ENCODE measurements at regions of chr11 and their contacts with region 1.

Region 1: GRCh38 chr11:72141066-72141465 is 5.5 kb downstream of the FOLR3 start:
- DNase-seq: peak; percentile 78
- ATAC-seq: peak; percentile 78
- H3K4me3 Mint-ChIP-seq: peak overlapping the region; percentile 0
- H3K27ac Mint-ChIP-seq: peak overlapping the region; percentile 67
- H3K4me1 Mint-ChIP-seq: peaks cover 45% of the 10 kb centered on the region
- H3K27me3 Mint-ChIP-seq: no peaks in the 10 kb centered on the region

Region 2: DNA sequence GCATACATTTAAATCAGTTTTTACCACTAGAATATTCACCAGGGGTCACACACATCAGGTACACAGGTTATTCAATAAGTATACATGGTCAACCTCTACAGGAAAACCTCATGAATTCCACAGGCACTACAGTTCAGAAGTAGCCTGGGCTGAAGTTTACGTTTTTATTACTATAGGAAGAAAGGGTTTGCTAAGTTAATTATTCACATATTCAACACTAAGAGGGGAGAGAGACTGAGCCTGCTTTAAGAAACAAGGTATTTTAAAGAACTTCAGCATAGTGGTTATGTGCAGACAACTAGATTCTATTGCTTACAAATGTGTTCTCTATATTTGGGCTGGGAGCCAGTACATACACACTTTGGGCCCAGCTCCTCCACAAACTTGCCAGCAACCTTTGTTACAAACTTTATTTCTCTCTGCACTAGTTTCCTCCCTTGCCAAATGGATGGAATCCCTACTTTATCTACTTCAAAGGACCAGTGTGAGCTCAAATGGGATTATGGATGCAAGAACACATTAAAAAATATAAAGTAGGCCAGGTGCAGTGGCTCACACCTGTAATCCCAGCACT is 110.5 kb before region 1 on chr11:
- CTCF ChIA-PET with region 1: interaction called, 54 read pairs
- DNase-seq: no peak
- ATAC-seq: no peak
- H3K4me3 Mint-ChIP-seq: no peak overlapping the region
- H3K27ac Mint-ChIP-seq: no peak overlapping the region
- H3K4me1 Mint-ChIP-seq: peaks cover 11% of the 10 kb centered on the region
- H3K27me3 Mint-ChIP-seq: no peaks in the 10 kb centered on the region

Region 3: GRCh38 chr11:72100462-72100861 is 40.6 kb before region 1 on chr11:
- CTCF ChIA-PET with region 1: interaction called, 18 read pairs
- DNase-seq: no peak
- ATAC-seq: no peak
- H3K4me3 Mint-ChIP-seq: no peak overlapping the region
- H3K27ac Mint-ChIP-seq: peak overlapping the region; percentile 60
- H3K4me1 Mint-ChIP-seq: peaks cover 39% of the 10 kb centered on the region
- H3K27me3 Mint-ChIP-seq: no peaks in the 10 kb centered on the region

Region 4: GRCh38 chr11:72123117-72123653 is 17.9 kb before region 1 on chr11:
- CTCF ChIA-PET with region 1: interaction called, 11 read pairs
- DNase-seq: no peak
- ATAC-seq: no peak
- H3K4me3 Mint-ChIP-seq: no peak overlapping the region
- H3K27ac Mint-ChIP-seq: no peak overlapping the region
- H3K4me1 Mint-ChIP-seq: peaks cover 11% of the 10 kb centered on the region
- H3K27me3 Mint-ChIP-seq: peaks cover 19% of the 10 kb centered on the region

Region 5: GRCh38 chr11:72189461-72190275 is 48.6 kb after region 1 on chr11:
- CTCF ChIA-PET with region 1: interaction called, 31 read pairs
- DNase-seq: no peak
- ATAC-seq: no peak
- H3K4me3 Mint-ChIP-seq: no peak overlapping the region
- H3K27ac Mint-ChIP-seq: no peak overlapping the region
- H3K4me1 Mint-ChIP-seq: no peaks in the 10 kb centered on the region
- H3K27me3 Mint-ChIP-seq: no peaks in the 10 kb centered on the region

Region 6: DNA sequence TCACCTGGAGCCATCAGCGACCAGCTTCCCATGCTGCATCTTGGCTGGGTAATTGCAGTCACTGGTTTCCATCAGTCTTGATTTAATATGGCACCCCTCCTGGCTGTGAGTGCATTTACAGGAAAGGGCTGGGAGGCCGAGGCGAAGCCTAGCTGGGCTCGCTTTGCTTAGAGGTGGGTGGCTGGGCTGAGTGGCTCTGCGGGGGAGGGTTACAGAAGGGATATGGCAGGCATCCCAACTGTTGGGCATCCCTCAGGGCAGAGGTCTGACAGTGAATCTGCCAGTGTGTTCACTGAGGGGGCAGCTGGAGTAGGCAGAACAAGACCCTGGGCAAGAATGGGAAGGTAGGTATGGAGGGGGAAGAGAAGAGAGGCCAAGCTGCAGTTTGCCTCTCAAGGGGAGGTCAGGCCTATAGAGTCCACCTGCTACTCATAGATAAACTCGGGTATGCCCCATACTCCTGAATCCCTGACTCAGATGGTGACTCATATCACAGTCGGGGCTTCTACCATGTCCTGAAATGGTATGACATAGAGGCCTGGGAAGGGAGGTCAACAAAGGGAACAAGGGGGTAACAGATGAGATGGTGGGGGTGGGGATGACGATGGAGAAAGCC is 180.4 kb after region 1 on chr11:
- CTCF ChIA-PET with region 1: no interaction called
- DNase-seq: no peak
- ATAC-seq: no peak
- H3K4me3 Mint-ChIP-seq: no peak overlapping the region
- H3K27ac Mint-ChIP-seq: no peak overlapping the region
- H3K4me1 Mint-ChIP-seq: peaks cover 8% of the 10 kb centered on the region
- H3K27me3 Mint-ChIP-seq: no peaks in the 10 kb centered on the region

Region 7: GRCh38 chr11:72373163-72373562 is 232.1 kb after region 1 on chr11:
- CTCF ChIA-PET with region 1: no interaction called
- DNase-seq: no peak
- ATAC-seq: no peak
- H3K4me3 Mint-ChIP-seq: no peak overlapping the region
- H3K27ac Mint-ChIP-seq: no peak overlapping the region
- H3K4me1 Mint-ChIP-seq: no peaks in the 10 kb centered on the region
- H3K27me3 Mint-ChIP-seq: no peaks in the 10 kb centered on the region

Measured in activated CD8-positive, alpha-beta memory T cell treated with anti-CD3 and anti-CD28 coated beads, Interleukin-2, amount 10 ng/mL, durations not matched to agents 7 days and 5 days (primary cell).